HCT116 (cell line): ENCODE measurements at regions of chr2 and their contacts with region 1.

Region 1: GRCh38 chr2:227471924-227472264 is at the start of gene AGFG1:
- DNase-seq: peak; percentile 50
- ATAC-seq: peak; percentile 90
- H3K4me3 ChIP-seq: peak within 1 kb of the TSS; percentile 70 to 81
- H3K27ac ChIP-seq: peak within 1 kb of the TSS; percentile 67; the same call in 1 of the 2 replicates
- H3K4me1 ChIP-seq: peaks cover 11 to 24% of the 10 kb centered on the region in 2 experiments
- H3K27me3 ChIP-seq: no peaks in the 10 kb centered on the region
- CTCF ChIP-seq: peak; percentile 69 to 98 (median 90)
- POLR2A ChIP-seq: no peak
- RAD21 ChIP-seq: peak; percentile 51
- total RNA-seq, gene AGFG1: 72.5 TPM

Region 2: DNA sequence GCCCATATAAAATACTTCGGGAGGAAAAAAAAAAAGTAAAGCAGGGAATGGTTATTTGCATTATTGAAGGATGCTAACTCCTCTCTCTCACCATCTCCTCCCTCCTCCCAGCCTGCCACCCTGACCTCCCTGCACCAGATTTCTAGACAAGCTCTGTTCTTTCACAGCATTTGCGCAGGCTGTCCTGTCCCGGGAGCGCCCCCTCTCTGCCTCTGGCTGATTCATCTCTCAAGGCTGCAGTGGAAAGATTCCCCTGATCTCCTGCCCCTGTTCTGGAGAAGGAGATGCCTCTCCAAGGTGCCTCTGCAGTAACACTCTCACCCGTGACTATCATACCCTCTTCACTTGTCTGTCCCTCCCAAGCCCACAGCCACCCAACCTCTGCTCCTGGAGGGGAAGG is 346.4 kb before region 1 on chr2:
- CTCF ChIA-PET with region 1: no interaction called
- POLR2A ChIA-PET with region 1: no interaction called
- RAD21 ChIA-PET with region 1: no interaction called
- intact Hi-C with region 1: loop called (anchors 10 kb)
- DNase-seq: no peak
- ATAC-seq: peak; percentile 80
- H3K4me3 ChIP-seq: no peak overlapping the region
- H3K27ac ChIP-seq: no peak overlapping the region
- H3K4me1 ChIP-seq: no peaks in the 10 kb centered on the region
- H3K27me3 ChIP-seq: no peaks in the 10 kb centered on the region
- CTCF ChIP-seq: peak; percentile 31 to 61 (median 48); a peak in 5 of 6 replicates
- POLR2A ChIP-seq: no peak
- RAD21 ChIP-seq: peak; percentile 60

Region 3: GRCh38 chr2:227406177-227407031 is 65.5 kb before region 1 on chr2:
- CTCF ChIA-PET with region 1: no interaction called
- POLR2A ChIA-PET with region 1: interaction called, 3 read pairs
- RAD21 ChIA-PET with region 1: no interaction called
- intact Hi-C with region 1: loop called (anchors 5 kb)
- DNase-seq: peak; percentile 94
- ATAC-seq: peak; percentile 92
- H3K4me3 ChIP-seq: 0 out of 4 replicates have a peak overlapping the region, but pooled peaks of 1 of the 2 experiments have one; percentile 4
- H3K27ac ChIP-seq: peak overlapping the region; percentile 11; the same call in 1 of the 2 replicates
- H3K4me1 ChIP-seq: peaks cover 6 to 27% of the 10 kb centered on the region in 2 experiments
- H3K27me3 ChIP-seq: no peaks in the 10 kb centered on the region
- CTCF ChIP-seq: peak; percentile 71 to 92 (median 84)
- POLR2A ChIP-seq: no peak
- RAD21 ChIP-seq: peak; percentile 99

Region 4: GRCh38 chr2:227696787-227697679 is 225.1 kb after region 1 on chr2:
- CTCF ChIA-PET with region 1: no interaction called
- POLR2A ChIA-PET with region 1: no interaction called
- RAD21 ChIA-PET with region 1: no interaction called
- intact Hi-C with region 1: no loop called
- DNase-seq: no peak
- ATAC-seq: no peak
- H3K4me3 ChIP-seq: no peak overlapping the region
- H3K27ac ChIP-seq: no peak overlapping the region
- H3K4me1 ChIP-seq: no peaks in the 10 kb centered on the region
- H3K27me3 ChIP-seq: 0 out of 2 replicates have a peak, but pooled peaks cover 5% of the 10 kb centered on the region
- CTCF ChIP-seq: no peak
- POLR2A ChIP-seq: no peak
- RAD21 ChIP-seq: no peak